Ovary (tissue), 10 donors: ENCODE measurements at regions of chr12 and their contacts with region 1.

Region 1: DNA sequence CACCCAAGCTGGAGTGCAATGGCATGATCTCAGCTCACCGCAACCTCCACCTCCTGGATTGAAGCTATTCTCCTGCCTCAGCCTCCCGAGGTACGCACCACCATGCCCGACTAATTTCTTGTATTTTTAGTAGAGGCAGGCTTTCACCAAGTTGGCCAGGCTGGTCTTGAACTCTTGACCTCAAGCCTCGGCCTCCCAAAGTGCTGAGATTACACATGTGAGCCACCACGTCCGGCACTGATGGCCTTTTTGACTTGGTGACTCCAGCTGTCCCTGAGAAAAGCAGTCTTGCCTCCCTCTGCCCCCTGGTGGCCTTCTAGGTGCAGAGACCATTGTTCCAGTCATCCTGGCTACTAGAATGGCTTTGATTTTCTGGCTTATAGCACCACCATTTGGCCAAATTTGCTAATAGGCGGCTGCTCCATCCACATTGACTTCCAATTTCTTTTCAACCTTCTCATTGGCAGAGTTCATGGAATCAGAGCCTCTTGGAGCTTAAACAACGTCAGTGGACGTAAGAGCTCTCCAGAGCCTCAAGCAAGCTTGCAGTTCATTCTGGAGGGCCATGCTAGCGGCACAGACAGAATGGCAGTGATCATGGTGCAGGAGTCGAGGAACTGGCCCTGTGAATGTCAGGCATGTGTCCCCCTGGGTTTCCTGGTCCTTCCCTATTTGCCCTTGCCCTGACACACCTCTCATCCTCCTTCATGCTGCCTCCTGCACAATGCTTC is 25.4 kb upstream of the EIF4B start:
- DNase-seq: peak; percentile 71 to 85 (median 79)
- H3K4me3 ChIP-seq: no peak overlapping the region
- H3K27ac ChIP-seq: no peak overlapping the region
- H3K4me1 ChIP-seq: peaks cover 3% of the 10 kb centered on the region
- H3K27me3 ChIP-seq: no peaks in the 10 kb centered on the region
- CTCF ChIP-seq: peak; percentile 83 to 94 (median 94)
- EP300 ChIP-seq: no peak
- POLR2A ChIP-seq: peak; percentile 24

Region 2: DNA sequence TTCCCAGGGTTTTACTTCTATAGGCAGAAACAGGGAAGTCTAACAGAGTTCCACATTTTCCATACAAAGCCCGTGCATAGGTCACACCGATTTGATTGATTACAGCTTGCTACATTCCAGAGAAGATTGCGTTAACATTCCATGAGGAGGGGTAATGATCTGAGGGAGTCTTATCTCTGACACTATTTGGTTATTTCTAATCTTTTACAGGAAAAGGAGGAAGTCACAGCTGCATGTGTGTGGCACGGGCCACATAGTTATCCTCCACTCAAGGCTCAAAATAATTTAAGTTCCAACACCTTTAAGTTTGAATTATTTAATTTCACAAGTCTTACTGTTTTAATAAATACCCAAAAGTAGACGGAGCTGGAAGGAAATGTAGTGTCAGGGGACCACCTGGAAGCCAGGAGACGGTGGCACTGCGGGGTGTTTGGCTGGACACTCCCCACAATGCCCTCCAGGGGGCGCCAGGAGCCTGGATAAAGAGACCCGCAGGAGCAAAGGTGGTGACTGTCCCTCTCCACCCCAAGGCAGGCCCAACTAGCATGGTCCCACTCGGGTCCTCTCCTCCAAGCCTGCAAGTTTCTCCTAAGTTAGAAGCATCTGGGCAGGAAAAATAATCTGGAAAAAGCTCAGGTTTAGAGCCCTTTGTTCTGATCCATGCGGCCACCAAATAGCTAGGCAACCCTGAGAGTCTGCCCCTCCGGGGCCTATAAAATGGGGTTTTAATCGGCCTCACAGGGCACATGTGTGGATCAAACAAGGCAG is 96.1 kb before region 1 on chr12:
- intact Hi-C with region 1: loop called (anchors 2 to 5 kb)
- DNase-seq: peak; percentile 47 to 82 (median 75)
- H3K4me3 ChIP-seq: no peak overlapping the region
- H3K27ac ChIP-seq: no peak overlapping the region
- H3K4me1 ChIP-seq: no peaks in the 10 kb centered on the region
- H3K27me3 ChIP-seq: no peaks in the 10 kb centered on the region
- CTCF ChIP-seq: peak; percentile 46 to 84 (median 79)
- EP300 ChIP-seq: no peak
- POLR2A ChIP-seq: no peak